Esophagus muscularis mucosa (tissue), 4 donors: ENCODE measurements at regions of chr1 and their contacts with region 1.

Region 1: GRCh38 chr1:58739856-58740466 is 40.1 kb upstream of the MYSM1 start:
- DNase-seq: no peak
- H3K4me3 ChIP-seq: no peak overlapping the region
- H3K27ac ChIP-seq: no peak overlapping the region
- H3K4me1 ChIP-seq: peaks cover 0 to 8% (median 5%) of the 10 kb centered on the region in 4 donors
- H3K27me3 ChIP-seq: no peaks in the 10 kb centered on the region
- CTCF ChIP-seq: peak; percentile 80 to 89 (median 87)
- EP300 ChIP-seq: no peak
- POLR2A ChIP-seq: no peak

Region 2: DNA sequence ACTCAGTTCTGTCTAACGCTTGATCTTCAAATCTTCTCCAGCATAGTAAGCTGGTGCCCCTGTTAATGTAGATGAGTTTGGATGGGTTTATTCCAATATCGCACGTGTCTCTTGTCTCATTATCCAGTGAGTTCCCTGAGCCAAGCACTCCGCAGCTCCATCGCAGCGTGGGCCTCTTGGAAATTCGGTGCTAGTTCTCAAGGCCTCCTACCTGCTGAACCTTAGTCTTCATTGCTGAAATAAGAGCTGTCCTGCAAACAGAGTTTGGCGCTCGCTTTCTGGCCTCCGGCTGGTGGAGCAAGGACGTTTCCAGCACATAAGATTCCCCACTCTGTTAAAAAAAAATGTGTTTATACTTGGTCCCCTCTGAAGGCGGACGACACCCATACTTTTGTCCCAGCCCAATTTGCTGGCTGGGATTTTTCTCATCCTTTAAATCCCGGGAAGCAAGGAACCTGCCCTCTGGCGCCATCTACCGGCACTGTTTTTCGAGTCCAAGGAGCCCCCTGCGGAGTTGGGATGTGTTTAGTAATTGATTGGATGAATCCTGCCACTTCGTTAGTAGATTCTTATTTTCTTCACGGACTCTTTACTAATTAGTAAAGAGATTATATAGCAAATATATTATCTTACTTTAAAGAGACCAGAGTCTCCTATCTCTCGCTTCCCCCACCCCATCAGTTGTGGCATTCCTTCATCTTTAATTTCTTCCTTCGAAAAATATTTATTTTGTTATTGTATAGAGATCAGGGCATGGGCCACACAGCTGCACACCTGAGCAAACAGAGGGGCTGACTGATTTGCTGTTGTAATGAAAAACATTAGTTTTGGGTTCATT is 29.2 kb after region 1 on chr1:
- intact Hi-C with region 1: loop called (anchors 2 kb)
- DNase-seq: no peak
- H3K4me3 ChIP-seq: no peak overlapping the region
- H3K27ac ChIP-seq: no peak overlapping the region
- H3K4me1 ChIP-seq: peaks cover 19 to 33% (median 25%) of the 10 kb centered on the region in 4 donors
- H3K27me3 ChIP-seq: no peaks in the 10 kb centered on the region
- CTCF ChIP-seq: peak; percentile 73 to 84 (median 83)
- EP300 ChIP-seq: no peak
- POLR2A ChIP-seq: no peak

Region 3: GRCh38 chr1:58785441-58786058 is 45.6 kb after region 1 on chr1:
- intact Hi-C with region 1: no loop called
- DNase-seq: no peak
- H3K4me3 ChIP-seq: peak overlapping the region; percentile 79 to 93 (median 91)
- H3K27ac ChIP-seq: peak overlapping the region; percentile 98 to 100 (median 100)
- H3K4me1 ChIP-seq: peaks cover 6 to 20% (median 17%) of the 10 kb centered on the region in 4 donors
- H3K27me3 ChIP-seq: no peaks in the 10 kb centered on the region
- CTCF ChIP-seq: no peak
- EP300 ChIP-seq: no peak
- POLR2A ChIP-seq: no peak

Region 4: GRCh38 chr1:58798910-58799442 is 59.0 kb after region 1 on chr1:
- intact Hi-C with region 1: no loop called
- DNase-seq: no peak
- H3K4me3 ChIP-seq: no peak overlapping the region
- H3K27ac ChIP-seq: no peak overlapping the region
- H3K4me1 ChIP-seq: no peaks in the 10 kb centered on the region
- H3K27me3 ChIP-seq: no peaks in the 10 kb centered on the region
- CTCF ChIP-seq: no peak
- EP300 ChIP-seq: no peak
- POLR2A ChIP-seq: no peak

Region 5: DNA sequence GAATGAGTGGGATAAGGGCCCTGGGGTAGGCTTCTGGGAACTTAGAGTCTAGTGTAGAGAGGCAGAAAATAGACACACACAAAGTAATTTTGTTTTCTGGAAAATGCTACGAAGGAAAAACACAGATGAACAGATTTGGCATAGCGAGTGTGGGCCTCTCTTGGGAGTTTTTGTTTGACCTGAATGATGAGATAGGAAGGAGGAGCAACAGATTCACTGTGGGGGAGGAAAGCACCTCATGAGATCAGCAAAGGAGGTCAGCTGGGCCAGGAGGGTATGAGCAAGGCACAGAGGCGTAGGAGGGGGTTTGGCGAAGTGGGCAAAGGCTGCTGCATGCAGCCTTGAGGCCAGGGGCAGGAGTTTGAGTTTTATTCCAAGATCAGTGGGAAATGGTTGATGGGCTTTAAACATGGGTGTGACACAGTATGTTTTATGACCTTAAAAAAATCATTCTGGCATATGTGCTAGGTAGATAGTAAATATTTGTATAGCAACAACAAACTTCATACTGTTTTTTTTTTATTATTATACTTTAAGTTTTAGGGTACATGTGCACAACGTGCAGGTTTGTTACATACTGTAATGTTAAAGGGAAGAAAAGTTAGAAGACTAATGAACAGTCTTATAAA is 614.9 kb after region 1 on chr1:
- intact Hi-C with region 1: no loop called
- DNase-seq: no peak
- H3K4me3 ChIP-seq: no peak overlapping the region
- H3K27ac ChIP-seq: peak overlapping the region in 2 of 4 donors; percentile 15 to 41
- H3K4me1 ChIP-seq: peaks cover 13 to 28% (median 18%) of the 10 kb centered on the region in 4 donors
- H3K27me3 ChIP-seq: no peaks in the 10 kb centered on the region
- CTCF ChIP-seq: no peak
- EP300 ChIP-seq: no peak
- POLR2A ChIP-seq: no peak

Region 6: GRCh38 chr1:59759156-59759925 is 1019.4 kb after region 1 on chr1:
- intact Hi-C with region 1: loop called (anchors 2 kb)
- DNase-seq: peak; percentile 95
- H3K4me3 ChIP-seq: peak overlapping the region; percentile 32 to 47 (median 39)
- H3K27ac ChIP-seq: peak overlapping the region; percentile 33 to 73 (median 62)
- H3K4me1 ChIP-seq: peaks cover 7 to 14% (median 11%) of the 10 kb centered on the region in 4 donors
- H3K27me3 ChIP-seq: no peaks in the 10 kb centered on the region
- CTCF ChIP-seq: peak; percentile 96 to 99 (median 98)
- EP300 ChIP-seq: no peak
- POLR2A ChIP-seq: no peak